ENCODE measurements at regions of chr14 and their contacts with region 1.

Region 1: GRCh38 chr14:101628471-101628966 is 67.2 kb downstream of the DIO3 start:
- DNase-seq: peak; percentile 76
- H3K4me3 ChIP-seq: peak overlapping the region in 1 of 4 donors; percentile 28
- H3K27ac ChIP-seq: no peak overlapping the region
- H3K4me1 ChIP-seq: peaks cover 0 to 13% (median 7%) of the 10 kb centered on the region in 4 donors
- H3K27me3 ChIP-seq: no peaks in the 10 kb centered on the region
- CTCF ChIP-seq: peak; percentile 97 to 100 (median 99)
- EP300 ChIP-seq: no peak
- POLR2A ChIP-seq: no peak

Region 2: GRCh38 chr14:100383727-100384158 is 1244.8 kb before region 1 on chr14:
- in situ Hi-C with region 1: no loop called
- intact Hi-C with region 1: loop called (anchors 10 kb)
- DNase-seq: peak; percentile 75
- H3K4me3 ChIP-seq: no peak overlapping the region
- H3K27ac ChIP-seq: no peak overlapping the region
- H3K4me1 ChIP-seq: peaks cover 0 to 31% (median 14%) of the 10 kb centered on the region in 4 donors
- H3K27me3 ChIP-seq: no peaks in the 10 kb centered on the region
- CTCF ChIP-seq: peak; percentile 77 to 90 (median 79)
- EP300 ChIP-seq: no peak
- POLR2A ChIP-seq: no peak

Region 3: GRCh38 chr14:100828031-100828769 is 800.3 kb before region 1 on chr14:
- in situ Hi-C with region 1: loop called in 2 of 4 experiments (anchors 25 kb)
- intact Hi-C with region 1: no loop called
- DNase-seq: no peak
- H3K4me3 ChIP-seq: no peak overlapping the region
- H3K27ac ChIP-seq: no peak overlapping the region
- H3K4me1 ChIP-seq: no peaks in the 10 kb centered on the region
- H3K27me3 ChIP-seq: peaks cover 33% of the 10 kb centered on the region
- CTCF ChIP-seq: peak in 1 of 5 experiments; percentile 12
- EP300 ChIP-seq: no peak
- POLR2A ChIP-seq: no peak

Region 4: GRCh38 chr14:100850841-100851585 is 777.5 kb before region 1 on chr14:
- in situ Hi-C with region 1: loop called in 3 of 4 experiments (anchors 10 to 25 kb)
- intact Hi-C with region 1: loop called (anchors 5 kb)
- DNase-seq: peak; percentile 92
- H3K4me3 ChIP-seq: no peak overlapping the region
- H3K27ac ChIP-seq: no peak overlapping the region
- H3K4me1 ChIP-seq: peaks cover 0 to 8% (median 0%) of the 10 kb centered on the region in 4 donors
- H3K27me3 ChIP-seq: no peaks in the 10 kb centered on the region
- CTCF ChIP-seq: peak; percentile 82 to 94 (median 91)
- EP300 ChIP-seq: no peak
- POLR2A ChIP-seq: no peak

Measured in transverse colon (tissue), 4 donors.